ENCODE measurements at regions of chr14 and their contacts with region 1.

Region 1: DNA sequence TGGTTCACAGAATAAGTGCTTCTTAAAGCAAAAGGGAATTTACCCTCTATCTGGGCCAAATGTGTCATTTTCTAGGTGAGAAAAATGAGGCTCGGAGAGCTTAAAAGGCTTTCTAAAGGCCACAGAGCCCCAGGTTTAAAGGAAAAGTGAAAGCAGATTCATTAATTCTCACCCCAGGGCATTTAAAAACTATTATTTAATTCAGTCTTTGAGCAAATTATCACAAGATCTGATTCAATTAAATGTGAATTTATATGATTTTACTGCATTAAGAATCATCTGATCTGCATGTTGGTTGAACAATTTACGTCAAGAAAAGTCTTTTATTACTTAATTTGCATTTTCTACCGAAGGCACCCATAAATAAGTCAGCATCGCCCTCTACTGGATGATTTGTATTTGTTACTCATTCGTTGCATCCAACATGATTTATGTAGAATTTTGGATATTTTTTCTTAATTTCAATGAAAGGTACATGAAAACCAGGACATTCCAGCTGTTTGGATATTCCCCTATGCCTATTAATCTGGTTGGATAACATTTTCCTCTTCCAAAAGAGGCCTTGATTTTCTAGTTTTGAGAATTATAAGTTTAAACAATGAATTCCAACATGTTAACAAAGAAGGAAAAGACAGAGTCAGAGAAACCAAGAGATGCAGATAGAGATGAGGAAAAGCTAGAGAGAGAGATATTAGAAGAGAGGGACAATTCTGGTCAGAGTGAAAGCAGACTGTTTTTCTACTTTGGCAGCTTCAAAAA is 19.1 kb upstream of the DHRS7 start:
- DNase-seq: no peak
- CTCF ChIP-seq: peak; percentile 70

Region 2: GRCh38 chr14:59964251-59965007 is 219.9 kb before region 1 on chr14:
- in situ Hi-C with region 1: loop called (anchors 25 kb)
- DNase-seq: no peak
- CTCF ChIP-seq: no peak

Region 3: GRCh38 chr14:60064491-60065072 is 119.7 kb before region 1 on chr14:
- in situ Hi-C with region 1: loop called (anchors 5 kb)
- DNase-seq: peak; percentile 39
- CTCF ChIP-seq: peak; percentile 51

Region 4: GRCh38 chr14:60561845-60562746 is 377.8 kb after region 1 on chr14:
- in situ Hi-C with region 1: loop called (anchors 25 kb)
- DNase-seq: peak; percentile 39
- CTCF ChIP-seq: peak; percentile 82

Region 5: GRCh38 chr14:60632777-60633176 is 448.5 kb after region 1 on chr14:
- in situ Hi-C with region 1: no loop called
- DNase-seq: no peak
- CTCF ChIP-seq: no peak

Measured in GM13977 (cell line).